Right lobe of liver (tissue), 6 donors: ENCODE measurements at regions of chr11 and their contacts with region 1.

Region 1: GRCh38 chr11:12963792-12964536 is 45.2 kb upstream of the RASSF10 start:
- DNase-seq: peak; percentile 51 to 67 (median 63)
- ATAC-seq: peak; percentile 90 to 93 (median 92)
- H3K4me3 ChIP-seq: no peak overlapping the region
- H3K27ac ChIP-seq: no peak overlapping the region
- H3K4me1 ChIP-seq: no peaks in the 10 kb centered on the region
- H3K27me3 ChIP-seq: no peaks in the 10 kb centered on the region
- CTCF ChIP-seq: peak; percentile 80 to 89 (median 86)
- POLR2A ChIP-seq: no peak

Region 2: GRCh38 chr11:13016415-13016814 is 52.5 kb after region 1 on chr11:
- intact Hi-C with region 1: no loop called
- DNase-seq: no peak
- ATAC-seq: no peak
- H3K4me3 ChIP-seq: no peak overlapping the region
- H3K27ac ChIP-seq: no peak overlapping the region
- H3K4me1 ChIP-seq: peaks cover 0 to 13% (median 4%) of the 10 kb centered on the region in 4 donors
- H3K27me3 ChIP-seq: peaks cover 11 to 23% of the 10 kb centered on the region in 2 donors
- CTCF ChIP-seq: no peak
- POLR2A ChIP-seq: no peak

Region 3: GRCh38 chr11:13152736-13153533 is 189.0 kb after region 1 on chr11:
- intact Hi-C with region 1: loop called (anchors 5 to 10 kb)
- DNase-seq: no peak
- ATAC-seq: peak in 1 of 4 donors; percentile 44
- H3K4me3 ChIP-seq: no peak overlapping the region
- H3K27ac ChIP-seq: no peak overlapping the region
- H3K4me1 ChIP-seq: no peaks in the 10 kb centered on the region
- H3K27me3 ChIP-seq: no peaks in the 10 kb centered on the region
- CTCF ChIP-seq: peak; percentile 33 to 50 (median 44)
- POLR2A ChIP-seq: no peak